ENCODE measurements at regions of chr4 and their contacts with region 1.

Region 1: GRCh38 chr4:123168812-123169211 is 227.8 kb upstream of the SPRY1 start:
- DNase-seq: no peak

Region 2: GRCh38 chr4:123893011-123893981 is 724.5 kb after region 1 on chr4:
- intact Hi-C with region 1: loop called in 1 of 2 experiments (anchors 10 kb)
- DNase-seq: no peak

Measured in posterior vena cava (tissue), 2 donors.